Activated CD8-positive, alpha-beta memory T cell treated with anti-CD3 and anti-CD28 coated beads, Interleukin-2, amount 10 ng/mL, durations not matched to agents 7 days and 5 days (primary cell): ENCODE measurements at regions of chr6 and their contacts with region 1.

Region 1: DNA sequence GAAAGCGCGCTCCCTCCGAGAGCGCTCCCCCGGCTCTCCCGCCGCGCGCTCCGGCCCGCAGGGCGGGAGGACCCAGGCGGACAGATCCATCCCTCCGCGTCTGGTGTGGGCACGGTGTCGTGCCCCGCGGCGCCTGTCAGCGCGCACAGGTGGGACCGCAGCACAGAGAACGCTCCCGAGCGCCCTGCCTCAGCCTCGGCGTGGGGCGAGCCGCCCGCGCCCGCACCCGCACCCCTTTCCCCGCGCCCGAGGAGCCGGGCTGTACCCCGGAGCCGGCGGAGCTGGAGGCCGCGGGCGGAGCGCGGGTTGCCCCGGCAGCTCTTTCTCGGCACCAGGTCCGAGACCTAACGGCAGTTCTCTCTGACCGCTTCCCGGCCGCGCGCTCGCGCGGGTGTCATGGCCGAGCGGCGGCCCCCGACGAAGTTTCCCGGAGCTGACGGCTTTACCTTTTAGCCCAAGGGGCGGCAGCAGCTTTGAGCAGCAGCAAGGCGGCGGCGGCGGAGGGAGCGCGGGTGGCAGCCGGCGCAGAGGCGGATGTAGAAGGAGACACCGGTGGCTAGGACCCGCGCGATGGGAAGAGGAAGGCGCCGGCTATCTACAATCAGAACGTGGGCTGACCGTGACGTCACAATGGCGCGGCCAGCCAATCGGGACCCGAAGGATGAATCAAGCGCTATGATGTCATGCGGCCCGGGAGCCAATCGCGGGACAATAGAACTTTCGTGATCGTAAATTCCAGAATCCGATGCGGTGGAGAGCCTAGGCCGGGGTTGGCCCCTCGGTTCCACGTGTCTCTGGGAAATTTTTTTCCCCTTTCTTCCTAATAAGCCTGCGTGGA is at the start of gene ELOVL5:
- DNase-seq: peak; percentile 98
- ATAC-seq: peak; percentile 82
- H3K4me3 Mint-ChIP-seq: peak within 1 kb of the TSS; percentile 93
- H3K27ac Mint-ChIP-seq: peak within 1 kb of the TSS; percentile 89
- H3K4me1 Mint-ChIP-seq: peaks cover 45% of the 10 kb centered on the region
- H3K27me3 Mint-ChIP-seq: peaks cover 10% of the 10 kb centered on the region
- total RNA-seq, gene ELOVL5: 113 to 117 TPM

Region 2: GRCh38 chr6:53309059-53309900 is 39.3 kb before region 1 on chr6:
- CTCF ChIA-PET with region 1: interaction called, 28 read pairs
- DNase-seq: peak; percentile 48
- ATAC-seq: peak; percentile 13
- H3K4me3 Mint-ChIP-seq: no peak overlapping the region
- H3K27ac Mint-ChIP-seq: peak overlapping the region; percentile 64
- H3K4me1 Mint-ChIP-seq: peaks cover 80% of the 10 kb centered on the region
- H3K27me3 Mint-ChIP-seq: no peaks in the 10 kb centered on the region

Region 3: DNA sequence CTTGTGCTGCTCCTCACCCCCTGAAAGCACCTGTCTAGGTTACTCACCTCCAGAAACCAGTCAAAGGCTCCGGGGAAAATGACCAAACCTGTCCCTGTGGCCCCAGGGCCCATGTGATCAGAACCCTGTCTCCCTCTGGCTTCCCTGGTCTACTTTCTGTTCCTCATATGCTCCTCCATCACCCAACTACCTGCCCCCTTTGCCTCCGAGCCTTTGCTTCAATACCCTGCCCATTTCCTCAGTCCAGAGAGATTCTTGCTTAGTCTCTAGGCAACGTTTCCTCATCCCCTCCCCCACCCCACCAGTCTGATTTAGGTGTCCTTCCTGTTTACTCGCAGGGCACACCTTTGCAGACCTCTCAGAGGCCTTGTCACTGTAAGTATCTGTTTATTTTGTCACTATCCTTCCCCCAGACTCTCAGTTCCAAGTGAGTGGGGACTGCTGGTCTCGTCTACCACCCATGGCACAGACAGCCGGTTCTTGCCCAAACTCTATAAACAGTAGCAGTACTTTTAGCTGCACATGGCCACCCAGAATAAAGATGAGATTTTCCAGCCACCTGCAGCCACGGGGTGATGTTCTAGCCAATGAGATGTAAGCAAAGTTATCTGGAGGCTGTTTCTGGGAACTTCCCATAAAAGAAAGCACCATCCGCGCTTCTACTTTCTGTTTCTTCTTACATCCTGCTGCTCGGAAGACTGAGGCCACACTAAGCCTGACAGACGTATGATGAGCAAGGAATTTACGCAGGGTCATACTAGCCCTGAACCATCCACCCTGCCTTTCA is 13.2 kb before region 1 on chr6:
- CTCF ChIA-PET with region 1: interaction called, 13 read pairs
- DNase-seq: peak; percentile 83
- ATAC-seq: peak; percentile 80
- H3K4me3 Mint-ChIP-seq: peak overlapping the region; percentile 80
- H3K27ac Mint-ChIP-seq: peak overlapping the region; percentile 98
- H3K4me1 Mint-ChIP-seq: peaks cover 82% of the 10 kb centered on the region
- H3K27me3 Mint-ChIP-seq: no peaks in the 10 kb centered on the region

Region 4: GRCh38 chr6:53359072-53359842 is 10.7 kb after region 1 on chr6:
- CTCF ChIA-PET with region 1: interaction called, 12 read pairs
- DNase-seq: peak; percentile 95
- ATAC-seq: peak; percentile 95
- H3K4me3 Mint-ChIP-seq: peak overlapping the region; percentile 90
- H3K27ac Mint-ChIP-seq: peak overlapping the region; percentile 96
- H3K4me1 Mint-ChIP-seq: peaks cover 38% of the 10 kb centered on the region
- H3K27me3 Mint-ChIP-seq: peaks cover 6% of the 10 kb centered on the region